ENCODE measurements at regions of chr2 and their contacts with region 1.

Region 1: GRCh38 chr2:180980106-180980942 is at the start of gene UBE2E3:
- DNase-seq: peak; percentile 62 to 89 (median 77)
- ATAC-seq: peak; percentile 77
- H3K4me3 ChIP-seq: peak within 1 kb of the TSS; percentile 71 to 85
- H3K4me3 Mint-ChIP-seq: peak within 1 kb of the TSS; percentile 92
- H3K27ac ChIP-seq: peak within 1 kb of the TSS; percentile 55 to 62
- H3K27ac Mint-ChIP-seq: peak within 1 kb of the TSS; percentile 93
- H3K4me1 ChIP-seq: peaks cover 28% of the 10 kb centered on the region
- H3K4me1 Mint-ChIP-seq: peaks cover 45% of the 10 kb centered on the region
- H3K27me3 ChIP-seq: no peaks in the 10 kb centered on the region
- H3K27me3 Mint-ChIP-seq: no peaks in the 10 kb centered on the region
- CTCF ChIP-seq: no peak
- total RNA-seq, gene UBE2E3: 20.0 to 20.1 TPM

Region 2: GRCh38 chr2:179773986-179774385 is 1206.3 kb before region 1 on chr2:
- CTCF ChIA-PET with region 1: no interaction called
- POLR2A ChIA-PET with region 1: no interaction called
- intact Hi-C with region 1: no loop called
- DNase-seq: no peak
- ATAC-seq: no peak
- H3K4me3 ChIP-seq: no peak overlapping the region
- H3K4me3 Mint-ChIP-seq: no peak overlapping the region
- H3K27ac ChIP-seq: no peak overlapping the region
- H3K27ac Mint-ChIP-seq: no peak overlapping the region
- H3K4me1 ChIP-seq: no peaks in the 10 kb centered on the region
- H3K4me1 Mint-ChIP-seq: no peaks in the 10 kb centered on the region
- H3K27me3 ChIP-seq: peaks cover 0 to 2% of the 10 kb centered on the region in 2 experiments
- H3K27me3 Mint-ChIP-seq: peaks cover 10% of the 10 kb centered on the region
- CTCF ChIP-seq: no peak

Region 3: GRCh38 chr2:180006781-180007579 is 973.3 kb before region 1 on chr2 and contains the start of gene CWC22:
- CTCF ChIA-PET with region 1: no interaction called
- POLR2A ChIA-PET with region 1: no interaction called
- intact Hi-C with region 1: loop called (anchors 1 to 2 kb)
- DNase-seq: peak; percentile 74 to 96 (median 86)
- ATAC-seq: peak; percentile 93
- H3K4me3 ChIP-seq: peak within 1 kb of the TSS; percentile 72 to 88
- H3K4me3 Mint-ChIP-seq: peak within 1 kb of the TSS; percentile 93
- H3K27ac ChIP-seq: peak within 1 kb of the TSS; percentile 98 to 99
- H3K27ac Mint-ChIP-seq: peak within 1 kb of the TSS; percentile 99
- H3K4me1 ChIP-seq: peaks cover 14% of the 10 kb centered on the region
- H3K4me1 Mint-ChIP-seq: peaks cover 38% of the 10 kb centered on the region
- H3K27me3 ChIP-seq: no peaks in the 10 kb centered on the region
- H3K27me3 Mint-ChIP-seq: no peaks in the 10 kb centered on the region
- CTCF ChIP-seq: no peak
- total RNA-seq, gene CWC22: 13.8 to 15.3 TPM

Region 4: GRCh38 chr2:180970016-180970415 is 10.3 kb before region 1 on chr2:
- CTCF ChIA-PET with region 1: no interaction called
- POLR2A ChIA-PET with region 1: interaction called, 19 read pairs
- intact Hi-C with region 1: no loop called
- DNase-seq: no peak
- ATAC-seq: no peak
- H3K4me3 ChIP-seq: no peak overlapping the region
- H3K4me3 Mint-ChIP-seq: no peak overlapping the region
- H3K27ac ChIP-seq: no peak overlapping the region
- H3K27ac Mint-ChIP-seq: no peak overlapping the region
- H3K4me1 ChIP-seq: no peaks in the 10 kb centered on the region
- H3K4me1 Mint-ChIP-seq: no peaks in the 10 kb centered on the region
- H3K27me3 ChIP-seq: no peaks in the 10 kb centered on the region
- H3K27me3 Mint-ChIP-seq: no peaks in the 10 kb centered on the region
- CTCF ChIP-seq: no peak

Region 5: GRCh38 chr2:181140414-181140813 is 160.1 kb after region 1 on chr2:
- CTCF ChIA-PET with region 1: no interaction called
- POLR2A ChIA-PET with region 1: no interaction called
- intact Hi-C with region 1: loop called in 1 of 2 experiments (anchors 10 kb)
- DNase-seq: peak in 2 of 9 experiments; percentile 60 to 73
- ATAC-seq: peak; percentile 15
- H3K4me3 ChIP-seq: no peak overlapping the region
- H3K4me3 Mint-ChIP-seq: peak overlapping the region; percentile 80
- H3K27ac ChIP-seq: peak overlapping the region; percentile 58 to 73
- H3K27ac Mint-ChIP-seq: peak overlapping the region; percentile 99
- H3K4me1 ChIP-seq: peaks cover 62% of the 10 kb centered on the region
- H3K4me1 Mint-ChIP-seq: peaks cover 79% of the 10 kb centered on the region
- H3K27me3 ChIP-seq: no peaks in the 10 kb centered on the region
- H3K27me3 Mint-ChIP-seq: no peaks in the 10 kb centered on the region
- CTCF ChIP-seq: no peak

Region 6: GRCh38 chr2:181305301-181306123 is 325.2 kb after region 1 on chr2:
- CTCF ChIA-PET with region 1: no interaction called
- POLR2A ChIA-PET with region 1: no interaction called
- intact Hi-C with region 1: loop called (anchors 5 to 10 kb)
- DNase-seq: peak in 7 of 9 experiments; percentile 31 to 76 (median 54)
- ATAC-seq: peak; percentile 67
- H3K4me3 ChIP-seq: no peak overlapping the region
- H3K4me3 Mint-ChIP-seq: peak overlapping the region; percentile 71
- H3K27ac ChIP-seq: peak overlapping the region; percentile 79
- H3K27ac Mint-ChIP-seq: peak overlapping the region; percentile 96
- H3K4me1 ChIP-seq: peaks cover 78% of the 10 kb centered on the region
- H3K4me1 Mint-ChIP-seq: peaks cover 80% of the 10 kb centered on the region
- H3K27me3 ChIP-seq: no peaks in the 10 kb centered on the region
- H3K27me3 Mint-ChIP-seq: no peaks in the 10 kb centered on the region
- CTCF ChIP-seq: no peak

Region 7: GRCh38 chr2:181891966-181892798 is 911.9 kb after region 1 on chr2:
- CTCF ChIA-PET with region 1: no interaction called
- POLR2A ChIA-PET with region 1: no interaction called
- intact Hi-C with region 1: loop called in 1 of 2 experiments (anchors 2 kb)
- DNase-seq: peak; percentile 26 to 77 (median 61)
- ATAC-seq: peak; percentile 63
- H3K4me3 ChIP-seq: peak overlapping the region; percentile 80 to 85
- H3K4me3 Mint-ChIP-seq: peak overlapping the region; percentile 92
- H3K27ac ChIP-seq: peak overlapping the region; percentile 53 to 55
- H3K27ac Mint-ChIP-seq: peak overlapping the region; percentile 86
- H3K4me1 ChIP-seq: peaks cover 19% of the 10 kb centered on the region
- H3K4me1 Mint-ChIP-seq: peaks cover 39% of the 10 kb centered on the region
- H3K27me3 ChIP-seq: peaks cover 0 to 3% of the 10 kb centered on the region in 2 experiments
- H3K27me3 Mint-ChIP-seq: peaks cover 12% of the 10 kb centered on the region
- CTCF ChIP-seq: peak; percentile 14

Measured in CD8-positive, alpha-beta T cell (primary cell).